ENCODE measurements at regions of chr2 and their contacts with region 1.

Region 1: DNA sequence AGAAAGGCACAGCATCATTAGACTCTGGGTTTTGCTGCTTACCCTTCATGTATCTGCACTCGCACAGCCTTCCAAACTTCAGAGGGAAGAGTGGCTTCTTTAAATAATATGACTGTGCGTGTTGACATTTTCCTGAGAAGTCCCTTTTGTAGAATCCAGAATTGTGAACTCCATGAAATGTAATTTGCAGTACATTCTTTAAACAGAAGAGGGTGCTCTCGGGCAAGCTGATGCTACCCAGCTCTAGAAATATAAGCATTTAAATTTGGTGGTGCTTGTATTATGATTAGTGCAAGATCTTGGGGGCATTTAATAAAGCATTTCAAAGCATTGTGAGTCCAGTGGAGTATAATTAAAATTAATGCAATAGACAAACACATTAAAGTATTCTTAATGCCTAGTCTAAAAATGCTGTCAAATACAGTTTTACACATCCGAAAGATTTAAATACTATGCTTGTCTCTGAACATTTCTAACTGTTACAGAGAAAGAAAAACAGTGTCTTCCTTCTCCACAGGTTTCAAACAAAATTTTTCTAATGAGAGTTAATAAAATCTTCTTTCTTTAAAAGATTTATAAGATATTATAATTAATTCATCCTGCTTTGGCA is 17.3 kb upstream of the GTF2A1L start:
- DNase-seq: peak in 1 of 2 experiments; percentile 16
- H3K4me3 ChIP-seq: no peak overlapping the region
- H3K27ac ChIP-seq: no peak overlapping the region
- H3K4me1 ChIP-seq: no peaks in the 10 kb centered on the region
- H3K27me3 ChIP-seq: no peaks in the 10 kb centered on the region
- CTCF ChIP-seq: peak; percentile 90

Region 2: DNA sequence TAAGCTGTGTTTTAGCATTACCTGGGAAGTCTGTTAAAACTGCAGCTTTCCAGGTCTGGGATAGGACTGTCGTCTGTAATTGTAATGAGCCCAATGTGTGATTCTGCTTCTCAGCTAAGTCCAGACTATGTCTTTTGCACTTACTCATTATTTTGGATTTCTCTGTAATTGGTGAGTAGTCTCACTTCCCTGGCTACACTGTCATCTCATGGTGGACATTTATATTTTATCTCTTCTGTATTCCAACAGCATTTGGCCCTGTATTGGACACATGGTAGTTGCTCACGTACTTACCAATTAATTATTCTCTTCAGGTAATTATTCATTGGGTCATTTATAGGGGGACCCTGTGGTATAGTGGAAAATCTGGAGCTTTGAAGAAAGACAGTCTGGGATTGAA is 127.3 kb after region 1 on chr2:
- CTCF ChIA-PET with region 1: interaction called, 3 read pairs
- POLR2A ChIA-PET with region 1: no interaction called
- intact Hi-C with region 1: loop called (anchors 1 kb)
- DNase-seq: no peak
- H3K4me3 ChIP-seq: no peak overlapping the region
- H3K27ac ChIP-seq: no peak overlapping the region
- H3K4me1 ChIP-seq: no peaks in the 10 kb centered on the region
- H3K27me3 ChIP-seq: no peaks in the 10 kb centered on the region
- CTCF ChIP-seq: peak; percentile 48; the same call in 1 of the 2 replicates

Region 3: DNA sequence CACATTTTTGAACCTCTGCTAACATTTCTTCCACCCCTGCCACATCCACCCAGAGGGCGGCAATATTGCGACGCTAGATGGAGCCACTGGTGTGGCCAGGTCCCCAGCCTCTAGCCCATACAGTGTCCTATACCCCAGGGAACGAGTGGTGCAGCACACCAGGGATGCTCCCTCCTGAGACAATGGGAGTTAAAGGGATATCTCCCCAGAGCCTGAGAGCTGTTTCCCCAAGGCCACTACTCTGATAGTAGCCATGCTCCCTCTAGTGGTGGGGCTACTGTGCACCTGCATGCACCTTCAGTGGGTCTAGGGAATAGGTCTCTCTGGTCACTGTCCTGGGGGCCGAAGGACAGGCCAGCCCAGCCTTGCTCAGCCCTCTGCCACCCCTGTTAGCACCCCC is 890.4 kb after region 1 on chr2:
- CTCF ChIA-PET with region 1: no interaction called
- POLR2A ChIA-PET with region 1: no interaction called
- intact Hi-C with region 1: loop called (anchors 2 kb)
- DNase-seq: peak in 1 of 2 experiments; percentile 20
- H3K4me3 ChIP-seq: no peak overlapping the region
- H3K27ac ChIP-seq: no peak overlapping the region
- H3K4me1 ChIP-seq: no peaks in the 10 kb centered on the region
- H3K27me3 ChIP-seq: no peaks in the 10 kb centered on the region
- CTCF ChIP-seq: peak; percentile 83

Region 4: DNA sequence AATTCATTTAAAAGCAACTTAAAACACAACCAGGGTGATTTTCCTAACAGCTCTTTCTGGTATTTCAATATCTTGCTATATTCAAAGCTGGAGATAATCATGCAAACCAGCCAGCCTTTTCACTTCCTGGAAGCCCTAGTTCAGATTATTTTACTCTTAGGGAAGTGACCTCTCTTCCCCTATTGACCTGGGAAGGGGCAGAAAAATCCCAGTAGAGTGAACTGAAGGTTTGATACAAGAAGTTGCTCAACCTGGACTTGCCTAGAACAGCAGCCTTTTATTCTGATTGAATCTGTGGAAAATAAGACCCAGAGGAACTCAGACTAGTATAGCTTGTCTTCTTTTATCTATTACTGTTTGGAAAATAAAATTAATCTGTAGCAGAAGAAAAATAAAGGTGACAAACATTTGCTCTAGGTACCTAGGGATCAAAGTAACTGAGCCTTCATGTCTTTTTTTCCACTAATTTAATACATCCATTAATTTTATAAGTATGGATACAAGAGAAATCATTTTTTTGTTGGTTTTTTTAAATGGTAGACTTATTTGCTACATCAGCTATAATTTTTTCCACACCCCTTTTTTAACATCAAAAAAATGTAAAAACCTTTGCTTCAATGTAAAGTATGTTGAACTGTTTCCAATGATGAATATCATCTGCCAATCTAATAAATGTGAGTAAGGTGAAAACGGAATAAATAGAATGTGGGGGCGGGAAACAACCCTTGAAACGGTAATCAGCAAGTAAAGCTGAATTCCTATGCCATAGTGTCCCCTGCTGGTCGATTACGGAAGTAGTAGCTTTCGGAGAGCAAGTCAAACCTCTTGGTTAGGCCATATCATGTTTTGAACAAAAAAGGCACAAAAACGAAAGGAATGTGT is 1801.7 kb after region 1 on chr2:
- CTCF ChIA-PET with region 1: no interaction called
- POLR2A ChIA-PET with region 1: no interaction called
- intact Hi-C with region 1: loop called (anchors 2 kb)
- DNase-seq: peak in 1 of 2 experiments; percentile 20
- H3K4me3 ChIP-seq: no peak overlapping the region
- H3K27ac ChIP-seq: no peak overlapping the region
- H3K4me1 ChIP-seq: no peaks in the 10 kb centered on the region
- H3K27me3 ChIP-seq: no peaks in the 10 kb centered on the region
- CTCF ChIP-seq: peak; percentile 92

Measured in PC-9 (cell line).